Ovary (tissue), 10 donors: ENCODE measurements at regions of chr19 and their contacts with region 1.

Region 1: GRCh38 chr19:13093407-13094105 is 9.1 kb downstream of the LYL1 start:
- DNase-seq: peak; percentile 72 to 89 (median 85)
- H3K4me3 ChIP-seq: no peak overlapping the region
- H3K27ac ChIP-seq: peak overlapping the region in 1 of 2 donors; percentile 87
- H3K4me1 ChIP-seq: peaks cover 29% of the 10 kb centered on the region
- H3K27me3 ChIP-seq: no peaks in the 10 kb centered on the region
- CTCF ChIP-seq: peak; percentile 94 to 97 (median 97)
- EP300 ChIP-seq: no peak
- POLR2A ChIP-seq: peak; percentile 19

Region 2: GRCh38 chr19:12983542-12984142 is 109.9 kb before region 1 on chr19:
- intact Hi-C with region 1: loop called in 3 of 4 experiments (anchors 2 kb)
- DNase-seq: peak; percentile 77 to 92 (median 87)
- H3K4me3 ChIP-seq: peak overlapping the region; percentile 28
- H3K27ac ChIP-seq: no peak overlapping the region
- H3K4me1 ChIP-seq: peaks cover 1% of the 10 kb centered on the region
- H3K27me3 ChIP-seq: no peaks in the 10 kb centered on the region
- CTCF ChIP-seq: peak; percentile 90 to 99 (median 99)
- EP300 ChIP-seq: no peak
- POLR2A ChIP-seq: peak; percentile 28

Region 3: DNA sequence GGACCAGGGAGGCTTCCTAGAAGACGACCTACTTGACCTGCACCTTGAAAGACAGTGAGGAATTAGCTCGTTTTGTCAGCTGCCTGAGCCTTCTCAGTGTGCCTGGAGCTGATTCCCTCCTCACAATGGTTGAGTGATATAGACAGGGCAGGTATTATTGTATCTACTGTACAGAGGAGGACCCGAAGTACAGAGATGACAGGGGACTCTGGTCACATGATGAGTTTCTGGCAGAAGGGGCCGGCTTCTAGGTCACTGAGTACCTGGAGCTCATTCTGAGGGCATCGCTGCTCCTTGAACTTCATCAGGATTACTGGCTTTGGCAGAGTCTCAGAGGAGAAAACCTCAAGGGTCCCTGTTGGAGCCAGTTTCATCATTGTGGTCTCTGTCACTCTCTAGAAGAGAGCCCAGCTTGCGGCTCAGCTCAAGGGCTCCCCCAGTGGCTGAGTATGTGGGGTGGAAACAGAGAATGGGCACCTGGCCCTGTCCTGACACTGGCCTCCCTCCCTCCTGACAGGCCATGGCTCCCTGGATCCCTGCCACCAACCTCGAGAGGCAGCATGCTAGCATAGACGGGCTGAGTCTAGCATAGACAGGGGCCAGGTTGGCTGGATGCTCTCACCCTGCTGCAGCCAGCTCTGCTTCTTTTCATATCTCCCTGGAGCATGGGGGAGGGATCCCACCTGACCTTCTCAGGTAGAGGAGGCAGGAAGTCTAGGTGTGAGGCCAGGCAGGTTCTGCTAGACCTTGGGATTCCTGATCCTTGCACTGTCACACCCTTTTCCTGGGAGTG is 59.5 kb before region 1 on chr19:
- intact Hi-C with region 1: no loop called
- DNase-seq: peak; percentile 75 to 86 (median 83)
- H3K4me3 ChIP-seq: no peak overlapping the region
- H3K27ac ChIP-seq: peak overlapping the region; percentile 22 to 33
- H3K4me1 ChIP-seq: peaks cover 53% of the 10 kb centered on the region
- H3K27me3 ChIP-seq: no peaks in the 10 kb centered on the region
- CTCF ChIP-seq: peak; percentile 24 to 64 (median 57)
- EP300 ChIP-seq: no peak
- POLR2A ChIP-seq: no peak

Region 4: GRCh38 chr19:13069415-13070359 is 23.9 kb before region 1 on chr19:
- intact Hi-C with region 1: no loop called
- DNase-seq: no peak
- H3K4me3 ChIP-seq: no peak overlapping the region
- H3K27ac ChIP-seq: peak overlapping the region; percentile 37 to 49
- H3K4me1 ChIP-seq: peaks cover 34% of the 10 kb centered on the region
- H3K27me3 ChIP-seq: no peaks in the 10 kb centered on the region
- CTCF ChIP-seq: no peak
- EP300 ChIP-seq: no peak
- POLR2A ChIP-seq: no peak

Region 5: DNA sequence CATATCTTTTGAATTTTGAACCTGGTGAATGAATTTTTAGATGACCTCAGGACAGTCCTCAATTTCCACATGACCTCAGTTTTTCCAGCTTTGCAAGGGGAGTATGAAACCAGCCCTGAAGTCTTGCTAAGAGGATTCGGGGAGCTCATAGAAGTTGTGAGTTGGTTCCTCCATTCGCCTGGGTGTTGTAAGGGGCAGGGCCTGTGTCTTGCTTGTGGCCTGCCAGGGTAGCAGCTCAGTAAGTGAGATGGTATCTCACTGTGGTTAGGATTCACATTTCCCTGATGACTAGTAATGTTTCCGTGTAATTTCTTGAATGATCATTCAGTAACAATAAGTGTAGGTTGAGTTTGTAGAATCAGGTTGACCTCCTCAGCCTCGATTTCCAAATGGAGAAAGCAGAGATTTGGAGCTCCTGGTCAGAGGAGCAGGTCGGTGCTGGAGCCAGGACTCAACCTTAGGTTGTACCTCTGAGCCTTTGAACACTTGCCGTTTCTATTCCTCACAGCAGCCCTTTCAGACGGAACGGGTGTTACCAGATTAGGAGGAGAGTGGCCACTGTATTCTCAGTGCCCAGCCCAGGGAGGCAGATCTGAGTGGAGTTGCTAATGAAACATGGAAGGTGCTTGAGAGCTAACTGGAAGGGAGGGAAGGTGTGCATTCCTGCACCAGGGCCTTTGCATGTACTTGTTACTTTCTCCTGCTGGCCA is 39.1 kb after region 1 on chr19:
- intact Hi-C with region 1: no loop called
- DNase-seq: no peak
- H3K4me3 ChIP-seq: no peak overlapping the region
- H3K27ac ChIP-seq: no peak overlapping the region
- H3K4me1 ChIP-seq: no peaks in the 10 kb centered on the region
- H3K27me3 ChIP-seq: no peaks in the 10 kb centered on the region
- CTCF ChIP-seq: no peak
- EP300 ChIP-seq: no peak
- POLR2A ChIP-seq: no peak

Region 6: GRCh38 chr19:13228561-13228960 is 135.0 kb after region 1 on chr19:
- intact Hi-C with region 1: no loop called
- DNase-seq: no peak
- H3K4me3 ChIP-seq: no peak overlapping the region
- H3K27ac ChIP-seq: no peak overlapping the region
- H3K4me1 ChIP-seq: no peaks in the 10 kb centered on the region
- H3K27me3 ChIP-seq: no peaks in the 10 kb centered on the region
- CTCF ChIP-seq: no peak
- EP300 ChIP-seq: no peak
- POLR2A ChIP-seq: no peak